Mammary epithelial cell (primary cell): ENCODE measurements at regions of chr17 and their contacts with region 1.

Region 1: GRCh38 chr17:79991140-79991923 is 44.3 kb downstream of the TBC1D16 start:
- DNase-seq: peak; percentile 46
- H3K4me3 ChIP-seq: peak overlapping the region in 1 of 3 experiments; percentile 39
- H3K27ac ChIP-seq: no peak overlapping the region
- H3K4me1 ChIP-seq: peaks cover 13% of the 10 kb centered on the region
- H3K27me3 ChIP-seq: peaks cover 2% of the 10 kb centered on the region
- CTCF ChIP-seq: peak; percentile 41 to 73

Region 2: GRCh38 chr17:79749156-79749815 is 242.0 kb before region 1 on chr17:
- CTCF ChIA-PET with region 1: interaction called, 3 read pairs
- dilution Hi-C with region 1: loop called (anchors 25 kb)
- in situ Hi-C with region 1: no loop called
- intact Hi-C with region 1: loop called (anchors 2 kb)
- DNase-seq: peak; percentile 27
- H3K4me3 ChIP-seq: no peak overlapping the region
- H3K27ac ChIP-seq: no peak overlapping the region
- H3K4me1 ChIP-seq: no peaks in the 10 kb centered on the region
- H3K27me3 ChIP-seq: peaks cover 25% of the 10 kb centered on the region
- CTCF ChIP-seq: no peak

Region 3: GRCh38 chr17:79789534-79790353 is 201.6 kb before region 1 on chr17:
- CTCF ChIA-PET with region 1: no interaction called
- dilution Hi-C with region 1: no loop called
- in situ Hi-C with region 1: no loop called
- intact Hi-C with region 1: loop called (anchors 1 kb)
- DNase-seq: no peak
- H3K4me3 ChIP-seq: peak overlapping the region in 2 of 3 experiments; percentile 12 to 19
- H3K27ac ChIP-seq: no peak overlapping the region
- H3K4me1 ChIP-seq: peaks cover 14% of the 10 kb centered on the region
- H3K27me3 ChIP-seq: peaks cover 24% of the 10 kb centered on the region
- CTCF ChIP-seq: peak; percentile 31 to 62

Region 4: GRCh38 chr17:79810130-79811010 is 181.0 kb before region 1 on chr17:
- CTCF ChIA-PET with region 1: no interaction called
- dilution Hi-C with region 1: no loop called
- in situ Hi-C with region 1: loop called (anchors 25 kb)
- intact Hi-C with region 1: loop called (anchors 1 kb)
- DNase-seq: peak; percentile 80
- H3K4me3 ChIP-seq: peak overlapping the region in 2 of 3 experiments; percentile 9 to 42
- H3K27ac ChIP-seq: no peak overlapping the region
- H3K4me1 ChIP-seq: peaks cover 40% of the 10 kb centered on the region
- H3K27me3 ChIP-seq: peaks cover 25% of the 10 kb centered on the region
- CTCF ChIP-seq: no peak

Region 5: DNA sequence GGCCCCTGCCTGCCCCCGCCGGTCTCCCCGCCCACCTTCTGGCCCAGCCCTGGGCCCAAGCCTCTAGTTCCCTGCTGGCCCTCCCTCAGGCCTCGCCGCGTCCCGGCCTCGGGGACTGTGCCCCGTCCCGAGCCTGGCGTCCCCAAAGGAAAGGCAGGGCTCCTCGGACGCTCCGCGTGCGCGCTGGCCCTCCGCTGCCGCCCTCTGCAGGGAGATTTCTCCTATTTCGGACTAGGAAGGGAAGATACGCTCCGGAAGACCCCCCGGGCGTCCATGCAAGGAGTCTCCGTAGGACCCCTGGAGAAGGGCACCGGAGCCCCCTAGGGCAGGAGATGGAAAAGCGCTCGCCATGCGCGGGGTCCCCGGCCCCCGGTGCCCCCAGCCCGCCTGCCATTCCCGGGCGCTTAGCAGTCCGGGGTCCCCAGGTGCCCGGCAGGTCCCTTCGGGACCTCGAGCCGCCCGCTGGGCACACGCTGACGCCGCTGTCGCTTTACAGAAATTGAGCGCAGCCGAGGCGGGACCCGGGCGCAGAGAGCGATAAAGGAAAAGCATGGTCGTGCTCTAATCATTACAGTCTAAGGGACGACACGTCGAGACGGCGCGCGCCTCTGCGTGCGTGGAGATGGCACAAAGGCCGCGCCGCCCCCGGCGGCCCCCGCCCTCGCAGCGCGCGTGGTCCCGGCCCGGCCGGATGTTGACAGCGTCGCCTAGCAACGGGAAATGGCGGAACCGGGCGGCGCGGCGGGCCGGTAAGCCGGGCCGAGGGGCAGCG is 44.8 kb after region 1 on chr17 and contains the start of gene CCDC40:
- CTCF ChIA-PET with region 1: no interaction called
- dilution Hi-C with region 1: loop called (anchors 5 kb)
- in situ Hi-C with region 1: no loop called
- intact Hi-C with region 1: no loop called
- DNase-seq: peak; percentile 68
- H3K4me3 ChIP-seq: peak within 1 kb of the TSS; percentile 70 to 83 (median 77)
- H3K27ac ChIP-seq: peak within 1 kb of the TSS; percentile 58
- H3K4me1 ChIP-seq: peaks cover 10% of the 10 kb centered on the region
- H3K27me3 ChIP-seq: no peaks in the 10 kb centered on the region
- CTCF ChIP-seq: peak in 1 of 2 donors; percentile 33
- total RNA-seq, gene CCDC40: 2.7 to 3.0 TPM